CD4-positive, alpha-beta T cell (primary cell): ENCODE measurements at regions of chr12 and their contacts with region 1.

Region 1: DNA sequence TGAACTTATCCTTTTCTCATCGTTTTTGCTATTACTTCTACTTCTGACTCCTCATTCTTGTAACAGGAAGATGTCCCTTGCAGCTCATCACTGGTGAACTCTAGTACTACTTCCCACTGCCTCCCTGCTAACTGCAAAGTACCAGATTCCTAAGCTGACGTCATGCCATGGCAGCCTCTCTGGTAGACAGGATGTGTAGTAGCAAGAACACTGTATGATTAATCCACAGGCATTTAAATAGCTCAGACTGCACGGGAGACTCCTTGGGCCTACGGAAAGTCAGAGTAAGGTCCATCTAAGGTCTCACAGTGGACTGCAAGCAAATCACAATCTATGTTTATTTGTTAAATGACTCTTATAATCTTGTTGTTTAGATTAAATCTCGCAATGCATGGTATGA is 43.5 kb downstream of the DNAI7 start:
- DNase-seq: no peak
- ATAC-seq: no peak
- H3K4me3 ChIP-seq: no peak overlapping the region
- H3K4me3 Mint-ChIP-seq: no peak overlapping the region
- H3K27ac ChIP-seq: no peak overlapping the region
- H3K27ac Mint-ChIP-seq: no peak overlapping the region
- H3K4me1 ChIP-seq: no peaks in the 10 kb centered on the region
- H3K4me1 Mint-ChIP-seq: peaks cover 7% of the 10 kb centered on the region
- H3K27me3 ChIP-seq: no peaks in the 10 kb centered on the region
- H3K27me3 Mint-ChIP-seq: no peaks in the 10 kb centered on the region
- CTCF ChIP-seq: no peak

Region 2: GRCh38 chr12:24991209-24992049 is 160.0 kb before region 1 on chr12:
- CTCF ChIA-PET with region 1: interaction called, 7 read pairs
- POLR2A ChIA-PET with region 1: interaction called, 3 read pairs
- intact Hi-C with region 1: loop called in 1 of 2 experiments (anchors 1 kb)
- DNase-seq: peak in 6 of 14 experiments; percentile 1 to 82 (median 42)
- ATAC-seq: peak; percentile 97
- H3K4me3 ChIP-seq: no peak overlapping the region
- H3K4me3 Mint-ChIP-seq: no peak overlapping the region
- H3K27ac ChIP-seq: no peak overlapping the region
- H3K27ac Mint-ChIP-seq: no peak overlapping the region
- H3K4me1 ChIP-seq: no peaks in the 10 kb centered on the region
- H3K4me1 Mint-ChIP-seq: no peaks in the 10 kb centered on the region
- H3K27me3 ChIP-seq: no peaks in the 10 kb centered on the region
- H3K27me3 Mint-ChIP-seq: no peaks in the 10 kb centered on the region
- CTCF ChIP-seq: peak; percentile 67

Region 3: DNA sequence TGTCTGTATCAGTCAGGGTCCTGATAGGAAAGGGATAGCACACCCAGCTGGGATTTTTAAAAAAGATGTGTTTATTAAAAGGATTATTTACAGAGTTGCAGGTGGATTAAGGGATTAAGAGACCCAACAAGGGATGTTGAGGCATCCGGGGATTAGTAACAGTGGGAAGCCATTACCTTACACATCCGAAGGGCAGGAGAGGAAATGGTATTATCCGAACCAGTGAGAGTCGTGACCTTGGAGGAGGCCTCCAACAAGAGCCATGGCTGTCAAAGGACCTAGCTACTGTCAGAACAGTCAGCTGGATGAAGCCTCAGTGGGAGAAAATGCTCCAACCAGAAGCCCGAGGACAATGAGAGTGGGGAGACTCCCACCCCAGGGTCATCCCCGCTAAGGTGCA is 245.5 kb after region 1 on chr12:
- CTCF ChIA-PET with region 1: no interaction called
- POLR2A ChIA-PET with region 1: no interaction called
- intact Hi-C with region 1: loop called in 1 of 2 experiments (anchors 10 kb)
- DNase-seq: no peak
- ATAC-seq: no peak
- H3K4me3 ChIP-seq: no peak overlapping the region
- H3K4me3 Mint-ChIP-seq: no peak overlapping the region
- H3K27ac ChIP-seq: no peak overlapping the region
- H3K27ac Mint-ChIP-seq: no peak overlapping the region
- H3K4me1 ChIP-seq: no peaks in the 10 kb centered on the region
- H3K4me1 Mint-ChIP-seq: no peaks in the 10 kb centered on the region
- H3K27me3 ChIP-seq: no peaks in the 10 kb centered on the region
- H3K27me3 Mint-ChIP-seq: no peaks in the 10 kb centered on the region
- CTCF ChIP-seq: no peak